ENCODE measurements at regions of chr15 and their contacts with region 1.

Region 1: GRCh38 chr15:64067564-64068030 is 21.3 kb upstream of the DAPK2 start:
- DNase-seq: peak; percentile 73
- H3K4me3 ChIP-seq: no peak overlapping the region
- H3K27ac ChIP-seq: no peak overlapping the region
- H3K4me1 ChIP-seq: peaks cover 0 to 38% (median 10%) of the 10 kb centered on the region in 4 donors
- H3K27me3 ChIP-seq: no peaks in the 10 kb centered on the region
- CTCF ChIP-seq: peak; percentile 78 to 91 (median 84)
- EP300 ChIP-seq: no peak
- POLR2A ChIP-seq: no peak

Region 2: GRCh38 chr15:63466378-63467192 is 601.0 kb before region 1 on chr15:
- in situ Hi-C with region 1: loop called in 1 of 4 experiments (anchors 25 kb)
- intact Hi-C with region 1: no loop called
- DNase-seq: no peak
- H3K4me3 ChIP-seq: no peak overlapping the region
- H3K27ac ChIP-seq: peak overlapping the region in 1 of 4 donors; percentile 42
- H3K4me1 ChIP-seq: peaks cover 22 to 55% (median 46%) of the 10 kb centered on the region in 4 donors
- H3K27me3 ChIP-seq: no peaks in the 10 kb centered on the region
- CTCF ChIP-seq: peak; percentile 56 to 77 (median 61)
- EP300 ChIP-seq: no peak
- POLR2A ChIP-seq: no peak

Region 3: DNA sequence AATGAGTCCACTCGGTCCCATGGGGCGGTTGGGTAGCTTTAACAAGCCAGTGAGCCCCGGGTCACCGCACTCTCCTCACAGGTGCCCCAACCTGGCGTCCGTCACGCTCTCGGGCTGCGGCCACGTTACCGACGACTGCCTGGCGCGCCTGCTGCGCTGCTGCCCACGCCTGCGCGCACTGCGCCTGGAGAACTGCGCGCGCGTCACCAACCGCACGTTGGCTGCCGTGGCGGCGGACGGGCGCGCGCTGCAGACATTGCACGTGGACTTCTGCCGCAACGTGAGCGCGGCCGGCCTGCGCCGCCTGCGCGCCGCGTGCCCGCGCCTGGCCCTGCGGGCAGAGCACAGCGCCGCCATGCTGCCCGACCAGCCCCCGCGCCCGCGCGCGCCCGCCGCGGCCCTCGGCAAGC is 467.0 kb before region 1 on chr15:
- in situ Hi-C with region 1: loop called in 1 of 4 experiments (anchors 25 kb)
- intact Hi-C with region 1: no loop called
- DNase-seq: peak; percentile 91
- H3K4me3 ChIP-seq: peak overlapping the region; percentile 26 to 82 (median 66)
- H3K27ac ChIP-seq: peak overlapping the region; percentile 90 to 97 (median 94)
- H3K4me1 ChIP-seq: peaks cover 11 to 60% (median 56%) of the 10 kb centered on the region in 4 donors
- H3K27me3 ChIP-seq: no peaks in the 10 kb centered on the region
- CTCF ChIP-seq: no peak
- EP300 ChIP-seq: no peak
- POLR2A ChIP-seq: peak; percentile 84

Region 4: GRCh38 chr15:63729115-63729884 is 338.3 kb before region 1 on chr15:
- in situ Hi-C with region 1: loop called in 2 of 4 experiments (anchors 25 kb)
- intact Hi-C with region 1: loop called (anchors 10 kb)
- DNase-seq: peak; percentile 63
- H3K4me3 ChIP-seq: no peak overlapping the region
- H3K27ac ChIP-seq: peak overlapping the region in 2 of 4 donors; percentile 26 to 41
- H3K4me1 ChIP-seq: peaks cover 0 to 17% (median 0%) of the 10 kb centered on the region in 4 donors
- H3K27me3 ChIP-seq: no peaks in the 10 kb centered on the region
- CTCF ChIP-seq: no peak
- EP300 ChIP-seq: no peak
- POLR2A ChIP-seq: no peak

Region 5: DNA sequence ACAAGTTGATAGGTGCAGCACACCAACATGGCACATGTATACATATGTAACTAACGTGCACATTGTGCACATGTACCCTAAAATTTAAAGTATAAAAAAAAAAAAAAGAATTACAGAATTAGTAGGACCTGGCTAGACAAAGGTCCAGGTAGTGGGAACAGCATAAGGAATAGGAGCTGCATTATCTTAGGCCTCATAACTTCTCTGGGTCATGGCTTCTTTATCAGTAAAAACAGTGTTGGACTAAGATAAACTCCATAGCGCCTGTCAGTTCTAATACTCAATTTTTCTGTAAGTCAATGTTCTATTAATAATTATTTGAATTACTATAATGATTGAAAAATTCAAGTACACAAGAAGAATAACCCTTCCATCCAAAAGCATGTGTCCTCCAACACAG is 332.1 kb before region 1 on chr15:
- in situ Hi-C with region 1: loop called in 2 of 4 experiments (anchors 25 kb)
- intact Hi-C with region 1: loop called (anchors 10 kb)
- DNase-seq: no peak
- H3K4me3 ChIP-seq: no peak overlapping the region
- H3K27ac ChIP-seq: no peak overlapping the region
- H3K4me1 ChIP-seq: no peaks in the 10 kb centered on the region
- H3K27me3 ChIP-seq: no peaks in the 10 kb centered on the region
- CTCF ChIP-seq: no peak
- EP300 ChIP-seq: no peak
- POLR2A ChIP-seq: no peak

Region 6: DNA sequence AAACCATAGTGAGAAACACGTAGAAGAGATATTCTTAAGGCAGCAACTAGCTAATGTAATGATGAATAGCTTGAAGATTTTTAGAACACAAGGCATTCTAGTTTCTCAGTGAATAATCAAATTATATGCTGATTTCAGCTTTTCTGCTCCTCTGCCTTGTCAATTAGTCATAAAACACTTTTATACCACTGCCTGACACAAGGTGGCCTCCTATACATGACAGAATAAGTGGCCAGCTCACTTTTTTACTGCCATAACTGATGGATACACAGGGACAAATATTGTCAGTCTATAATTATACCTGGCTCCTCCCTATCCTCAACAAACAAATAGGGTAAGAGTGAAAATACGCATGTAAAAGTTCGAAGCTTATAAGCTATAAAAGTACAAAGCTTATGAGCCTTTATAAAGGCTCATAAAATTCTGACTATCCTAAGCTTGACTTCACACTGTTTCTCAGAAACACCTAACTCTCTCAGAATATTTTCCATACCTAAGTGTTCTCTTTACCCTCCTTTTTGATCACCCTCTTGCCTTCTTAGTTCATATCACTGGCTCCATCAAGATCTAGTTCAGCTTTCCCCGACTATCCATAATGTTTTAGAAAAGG is 315.4 kb before region 1 on chr15:
- in situ Hi-C with region 1: loop called (anchors 5 to 25 kb)
- intact Hi-C with region 1: no loop called
- DNase-seq: peak; percentile 25
- H3K4me3 ChIP-seq: no peak overlapping the region
- H3K27ac ChIP-seq: peak overlapping the region; percentile 30 to 49 (median 38)
- H3K4me1 ChIP-seq: peaks cover 0 to 9% (median 3%) of the 10 kb centered on the region in 4 donors
- H3K27me3 ChIP-seq: no peaks in the 10 kb centered on the region
- CTCF ChIP-seq: peak; percentile 69 to 90 (median 75)
- EP300 ChIP-seq: no peak
- POLR2A ChIP-seq: no peak

Region 7: DNA sequence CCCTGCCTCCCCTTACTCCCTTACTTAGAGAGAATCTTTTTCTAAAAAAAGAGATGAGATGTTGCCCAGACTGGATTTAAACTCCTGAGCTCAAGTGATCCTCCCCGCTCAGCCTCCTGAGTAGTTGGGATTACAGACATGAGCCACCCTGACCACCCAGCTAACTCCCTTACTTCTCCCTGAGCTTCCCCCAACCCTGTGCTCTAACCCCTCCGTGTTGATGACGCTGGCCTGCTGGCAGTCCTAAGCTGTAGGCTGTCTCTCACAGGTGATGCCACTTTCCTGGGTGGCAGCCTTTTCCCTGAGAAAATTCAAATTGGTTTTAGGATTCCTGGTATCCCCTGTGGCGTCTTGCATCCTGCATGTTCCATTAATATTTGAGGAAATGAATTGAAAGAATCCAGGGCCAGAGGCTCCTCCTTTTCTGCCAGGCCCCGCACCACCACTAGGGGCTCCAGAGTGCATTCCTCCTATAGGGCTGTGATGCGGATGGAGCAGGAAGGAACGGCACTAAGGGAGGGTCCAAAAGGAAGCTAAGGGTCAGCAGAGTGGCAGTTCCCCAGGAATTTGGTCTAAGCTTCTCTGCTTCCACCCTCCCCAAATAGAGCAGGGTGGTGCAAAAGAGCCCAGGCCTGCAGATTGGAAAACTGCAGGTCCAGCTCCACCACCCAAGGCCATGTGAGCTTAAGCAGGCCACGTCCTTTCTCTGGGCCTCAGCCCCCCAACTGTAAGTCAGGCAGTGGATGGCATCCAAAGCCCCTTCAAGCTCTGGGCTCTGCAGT is 122.4 kb before region 1 on chr15:
- in situ Hi-C with region 1: loop called in 1 of 4 experiments (anchors 25 kb)
- intact Hi-C with region 1: no loop called
- DNase-seq: peak; percentile 83
- H3K4me3 ChIP-seq: no peak overlapping the region
- H3K27ac ChIP-seq: no peak overlapping the region
- H3K4me1 ChIP-seq: peaks cover 0 to 10% (median 1%) of the 10 kb centered on the region in 4 donors
- H3K27me3 ChIP-seq: no peaks in the 10 kb centered on the region
- CTCF ChIP-seq: peak; percentile 90 to 96 (median 94)
- EP300 ChIP-seq: no peak
- POLR2A ChIP-seq: no peak

Region 8: GRCh38 chr15:64010719-64011118 is 56.9 kb before region 1 on chr15:
- in situ Hi-C with region 1: no loop called
- intact Hi-C with region 1: no loop called
- DNase-seq: peak; percentile 72
- H3K4me3 ChIP-seq: no peak overlapping the region
- H3K27ac ChIP-seq: peak overlapping the region; percentile 67 to 79 (median 74)
- H3K4me1 ChIP-seq: peaks cover 15 to 80% (median 47%) of the 10 kb centered on the region in 4 donors
- H3K27me3 ChIP-seq: no peaks in the 10 kb centered on the region
- CTCF ChIP-seq: no peak
- EP300 ChIP-seq: no peak
- POLR2A ChIP-seq: no peak

Measured in transverse colon (tissue), 4 donors.